AG04449 (cell line): ENCODE measurements at regions of chr12 and their contacts with region 1.

Region 1: GRCh38 chr12:130818635-130819576 is 20.1 kb downstream of the STX2 start:
- DNase-seq: no peak
- H3K4me3 ChIP-seq: peak overlapping the region; percentile 12; the same call in 1 of the 2 replicates
- CTCF ChIP-seq: peak; percentile 88

Region 2: DNA sequence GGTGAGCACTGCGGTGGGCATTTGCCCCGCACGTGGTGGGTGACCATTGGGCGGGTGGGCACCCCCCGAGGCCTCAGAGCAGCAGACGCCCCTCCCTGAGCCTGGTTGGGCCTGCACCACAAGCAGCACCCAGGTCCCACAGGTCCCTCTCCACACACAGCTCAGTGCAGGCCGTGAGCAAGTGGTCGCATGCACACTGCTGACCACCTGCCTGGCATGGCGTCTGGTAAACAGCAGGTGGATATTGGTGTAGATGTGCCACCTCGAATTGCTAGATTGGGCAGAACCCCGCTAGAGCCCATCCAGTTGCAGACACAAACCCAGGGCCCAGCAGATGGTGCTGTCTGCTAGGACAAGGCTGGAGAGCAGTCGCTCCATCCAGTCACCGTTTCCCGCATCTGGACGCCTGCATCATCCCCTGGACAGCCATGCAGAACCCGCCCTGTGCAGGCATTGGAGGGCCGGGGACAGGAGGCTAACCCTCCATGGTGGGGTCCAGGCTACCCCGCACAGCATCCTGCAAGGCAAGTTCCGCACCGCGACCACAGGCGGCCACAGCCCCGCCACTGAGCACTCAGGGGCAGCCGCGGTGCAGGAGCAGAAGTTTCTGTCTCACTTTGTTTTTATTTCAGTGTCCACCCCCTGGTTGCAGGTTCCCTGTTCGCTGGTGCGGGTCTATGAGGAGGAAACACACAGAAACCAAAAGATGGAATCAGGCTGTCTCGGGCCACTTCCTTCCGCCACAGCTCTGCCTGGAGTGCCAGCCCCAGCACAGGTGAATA is 57.2 kb before region 1 on chr12:
- CTCF ChIA-PET with region 1: interaction called, 14 read pairs
- POLR2A ChIA-PET with region 1: interaction called, 4 read pairs
- DNase-seq: peak; percentile 4
- H3K4me3 ChIP-seq: no peak overlapping the region; the same call in 1 of the 2 replicates
- CTCF ChIP-seq: peak; percentile 68

Region 3: DNA sequence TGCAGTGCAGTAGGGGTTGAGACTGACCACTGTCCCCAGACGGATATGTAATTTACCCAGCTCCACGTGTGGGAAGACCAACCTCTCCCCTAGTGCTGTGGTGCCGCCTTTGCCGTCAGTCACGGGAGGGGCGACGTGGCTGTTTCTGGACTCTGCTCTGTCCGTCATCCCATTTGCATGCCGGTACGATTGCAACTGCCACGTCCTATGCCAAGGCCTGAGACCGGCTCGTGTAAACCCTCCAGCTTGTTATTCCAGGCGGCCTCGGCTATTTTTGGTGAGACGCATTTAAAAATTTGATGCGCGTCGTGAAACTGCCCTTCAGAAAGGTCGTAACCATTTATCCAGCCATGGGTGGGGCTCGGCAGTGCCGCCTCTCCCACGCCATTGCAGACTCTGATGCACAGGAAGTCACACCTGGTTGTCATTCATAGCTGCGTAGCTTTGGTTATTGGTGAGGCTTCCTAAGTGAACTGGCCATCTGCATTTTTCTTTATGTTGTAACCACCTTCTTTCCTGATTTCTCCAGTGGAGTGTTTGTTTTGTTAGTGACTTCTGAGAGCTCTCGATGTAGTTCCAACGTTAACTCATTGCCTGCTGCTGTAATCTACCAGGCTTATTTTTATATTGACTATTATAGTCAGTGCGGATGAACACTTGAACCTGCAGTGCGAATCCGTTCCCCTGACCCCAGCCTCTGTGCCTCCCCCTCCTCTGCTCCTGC is 209.9 kb after region 1 on chr12:
- CTCF ChIA-PET with region 1: no interaction called
- POLR2A ChIA-PET with region 1: no interaction called
- DNase-seq: no peak
- H3K4me3 ChIP-seq: no peak overlapping the region
- CTCF ChIP-seq: no peak

Region 4: GRCh38 chr12:131242741-131243496 is 424.0 kb after region 1 on chr12:
- CTCF ChIA-PET with region 1: no interaction called
- POLR2A ChIA-PET with region 1: no interaction called
- DNase-seq: no peak
- H3K4me3 ChIP-seq: no peak overlapping the region
- CTCF ChIP-seq: no peak